Astrocyte of the cerebellum (primary cell): ENCODE measurements at regions of chr2 and their contacts with region 1.

Region 1: DNA sequence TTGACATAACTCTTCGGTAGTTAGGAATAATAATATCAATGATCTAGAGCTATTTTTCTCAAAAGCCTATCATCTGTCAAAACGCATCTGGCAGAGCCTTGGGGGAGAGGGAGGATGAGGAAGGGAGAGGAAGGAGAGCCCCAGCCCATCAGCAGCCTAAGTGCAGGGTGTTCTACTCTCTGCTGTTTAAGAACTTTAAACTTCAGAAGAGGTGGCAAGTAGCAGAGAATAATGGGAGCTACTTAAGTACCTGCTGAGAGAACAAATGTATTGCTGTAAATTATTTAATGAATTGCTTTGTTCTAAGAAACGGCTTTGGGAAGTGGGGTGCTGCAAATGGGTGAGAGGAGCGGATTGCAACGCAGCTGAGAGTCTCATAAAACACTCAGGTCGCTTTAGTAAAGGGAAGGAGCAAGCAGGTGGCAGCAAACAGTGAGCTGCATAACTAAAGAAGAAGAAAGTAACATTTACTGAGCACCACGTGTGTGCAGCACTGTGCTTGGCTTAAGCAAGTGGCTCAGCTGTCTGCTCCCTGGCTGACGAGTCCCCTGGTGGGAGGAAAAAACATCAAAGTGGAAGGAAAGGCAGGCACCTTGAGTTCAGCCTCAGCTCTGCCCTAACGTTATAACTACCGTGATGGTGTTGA is 26.3 kb upstream of the SH3RF3 start:
- DNase-seq: no peak
- H3K4me3 ChIP-seq: no peak overlapping the region
- CTCF ChIP-seq: no peak

Region 2: GRCh38 chr2:109009920-109010610 is 92.6 kb before region 1 on chr2:
- in situ Hi-C with region 1: loop called (anchors 5 kb)
- DNase-seq: no peak
- H3K4me3 ChIP-seq: no peak overlapping the region
- CTCF ChIP-seq: no peak